HCT116 (cell line): ENCODE measurements at regions of chr15 and their contacts with region 1.

Region 1: DNA sequence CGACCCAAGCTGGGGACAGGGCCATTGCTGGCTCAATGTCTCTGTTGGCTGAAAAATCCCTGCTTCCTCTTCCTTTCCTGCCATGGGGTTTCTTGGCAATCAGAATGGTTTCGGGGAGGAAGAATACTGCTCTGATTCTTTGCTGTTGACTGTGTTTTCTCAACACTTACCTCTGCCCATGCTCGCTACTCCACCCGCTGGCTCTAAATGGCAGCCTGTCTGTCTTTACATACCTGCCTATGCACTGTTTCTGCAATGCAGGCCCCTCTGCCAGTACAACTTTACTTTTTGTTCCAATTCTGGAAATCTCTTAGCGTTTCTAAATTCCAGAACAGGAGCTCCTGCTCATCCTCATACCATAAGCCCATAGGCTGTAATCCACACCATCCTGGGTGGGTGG is 38.4 kb upstream of the SNRPA1 start:
- DNase-seq: no peak
- ATAC-seq: peak; percentile 41
- H3K4me3 ChIP-seq: peak overlapping the region; percentile 65 to 69
- H3K27ac ChIP-seq: peak overlapping the region; percentile 59
- H3K4me1 ChIP-seq: peaks cover 3 to 14% of the 10 kb centered on the region in 2 experiments; a peak in 3 of 4 replicates
- H3K27me3 ChIP-seq: no peaks in the 10 kb centered on the region
- CTCF ChIP-seq: no peak; a peak in 1 of 6 replicates
- POLR2A ChIP-seq: no peak
- RAD21 ChIP-seq: no peak

Region 2: DNA sequence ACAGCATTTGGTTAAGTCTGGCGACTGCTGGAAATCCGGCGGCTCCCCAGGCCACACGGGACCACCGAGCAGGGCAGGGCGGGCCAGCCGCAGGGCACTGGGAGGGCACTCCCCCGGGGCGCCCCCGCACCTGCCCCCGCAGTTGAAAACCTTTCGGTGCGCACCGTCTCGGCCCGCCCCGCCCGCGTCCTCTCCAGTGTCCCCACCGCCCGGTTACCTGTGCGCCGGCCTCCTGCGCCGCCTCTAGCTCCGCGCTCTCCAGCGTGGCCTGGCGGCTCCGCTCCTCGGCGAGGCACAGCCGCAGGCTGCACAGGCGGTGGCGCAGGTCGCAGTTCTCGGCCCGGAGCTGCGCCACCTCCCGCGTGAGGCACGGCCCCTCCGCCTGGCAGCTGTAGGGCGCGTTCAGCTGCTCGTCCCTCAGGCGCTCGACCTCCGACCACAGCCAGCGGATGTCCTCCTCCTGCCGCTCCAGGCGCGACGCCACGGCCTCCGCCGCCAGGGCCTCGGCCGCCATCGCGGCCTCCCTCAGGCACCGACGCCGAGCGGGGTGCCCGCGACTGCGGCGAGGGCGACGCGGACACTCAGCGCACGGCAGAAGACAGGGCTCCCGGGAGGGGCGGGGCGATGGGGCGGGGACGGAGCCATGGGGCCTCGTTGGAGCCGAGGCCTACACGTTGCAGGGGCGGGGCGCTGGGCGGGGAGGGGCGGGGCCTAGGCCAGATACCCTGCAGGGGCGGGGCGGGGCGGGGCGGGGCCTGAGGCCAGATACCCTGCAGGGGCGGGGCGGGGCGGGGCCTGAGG is 390.7 kb after region 1 on chr15 and contains the start of gene TARS3:
- CTCF ChIA-PET with region 1: no interaction called
- POLR2A ChIA-PET with region 1: no interaction called
- RAD21 ChIA-PET with region 1: no interaction called
- intact Hi-C with region 1: loop called (anchors 10 kb)
- DNase-seq: peak; percentile 73
- ATAC-seq: peak; percentile 96
- H3K4me3 ChIP-seq: peak within 1 kb of the TSS; percentile 54 to 67
- H3K27ac ChIP-seq: peak within 1 kb of the TSS; percentile 69
- H3K4me1 ChIP-seq: peaks cover 8 to 10% of the 10 kb centered on the region in 2 experiments; a peak in 3 of 4 replicates
- H3K27me3 ChIP-seq: no peaks in the 10 kb centered on the region
- CTCF ChIP-seq: 0 out of 6 replicates have a peak, but pooled peaks of 1 of the 3 experiments have one; percentile 9
- POLR2A ChIP-seq: peak; percentile 88
- RAD21 ChIP-seq: no peak
- total RNA-seq, gene TARS3: 11.1 TPM